Naive thymus-derived CD4-positive, alpha-beta T cell (primary cell): ENCODE measurements at regions of chr3 and their contacts with region 1.

Region 1: DNA sequence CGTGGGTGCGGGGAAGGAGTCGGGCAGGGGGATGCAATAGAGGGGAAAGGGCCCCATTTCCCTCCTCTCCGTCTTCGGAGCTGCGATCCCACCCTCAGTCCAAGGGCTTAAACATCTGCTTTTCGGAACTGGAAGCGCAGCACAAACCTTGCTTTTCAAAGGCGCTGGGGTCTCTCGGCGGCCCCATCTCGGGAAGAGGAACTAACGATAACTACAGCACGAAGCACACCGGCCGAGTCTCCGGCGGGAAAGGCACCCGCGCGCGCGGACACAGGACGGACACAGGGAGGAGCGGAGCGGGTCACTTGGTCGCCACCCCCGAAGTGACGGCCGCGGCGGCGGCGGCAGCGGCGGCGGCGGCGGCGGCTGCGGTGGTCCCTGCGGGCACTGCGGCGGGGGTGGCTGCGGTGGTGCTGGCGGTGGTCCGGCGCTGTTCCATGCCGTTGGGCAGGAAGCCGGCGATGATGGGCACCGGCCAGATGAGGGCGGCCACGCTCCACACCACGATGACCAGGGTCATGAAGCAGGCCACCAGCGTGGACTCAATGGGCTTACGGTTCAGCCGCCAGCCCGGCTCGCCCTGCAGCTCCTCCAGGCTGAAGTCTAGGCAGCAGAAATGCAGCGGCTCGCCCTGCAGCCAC is 1.1 kb downstream of the TMEM158 start:
- DNase-seq: peak in 4 of 9 donors; percentile 8 to 50 (median 20)
- ATAC-seq: peak; percentile 52
- H3K4me3 ChIP-seq: no peak overlapping the region
- H3K4me3 Mint-ChIP-seq: peak overlapping the region; percentile 84 to 89 (median 87)
- H3K27ac ChIP-seq: no peak overlapping the region
- H3K27ac Mint-ChIP-seq: peak overlapping the region in 3 of 9 donors; percentile 38 to 84 (median 66)
- H3K4me1 ChIP-seq: peaks cover 4 to 7% of the 10 kb centered on the region in 2 donors
- H3K4me1 Mint-ChIP-seq: peaks cover 10 to 16% (median 13%) of the 10 kb centered on the region in 7 donors
- H3K27me3 ChIP-seq: peaks cover 8 to 14% of the 10 kb centered on the region in 2 donors
- H3K27me3 Mint-ChIP-seq: peaks cover 71 to 82% (median 81%) of the 10 kb centered on the region in 5 donors

Region 2: GRCh38 chr3:45269952-45270351 is 45.0 kb after region 1 on chr3:
- CTCF ChIA-PET with region 1: no interaction called
- POLR2A ChIA-PET with region 1: no interaction called
- intact Hi-C with region 1: no loop called
- DNase-seq: no peak
- ATAC-seq: no peak
- H3K4me3 ChIP-seq: no peak overlapping the region
- H3K4me3 Mint-ChIP-seq: no peak overlapping the region
- H3K27ac ChIP-seq: no peak overlapping the region
- H3K27ac Mint-ChIP-seq: no peak overlapping the region
- H3K4me1 ChIP-seq: no peaks in the 10 kb centered on the region
- H3K4me1 Mint-ChIP-seq: peaks cover 0 to 2% (median 0%) of the 10 kb centered on the region in 7 donors
- H3K27me3 ChIP-seq: no peaks in the 10 kb centered on the region
- H3K27me3 Mint-ChIP-seq: peaks cover 5 to 28% (median 11%) of the 10 kb centered on the region in 5 donors

Region 3: DNA sequence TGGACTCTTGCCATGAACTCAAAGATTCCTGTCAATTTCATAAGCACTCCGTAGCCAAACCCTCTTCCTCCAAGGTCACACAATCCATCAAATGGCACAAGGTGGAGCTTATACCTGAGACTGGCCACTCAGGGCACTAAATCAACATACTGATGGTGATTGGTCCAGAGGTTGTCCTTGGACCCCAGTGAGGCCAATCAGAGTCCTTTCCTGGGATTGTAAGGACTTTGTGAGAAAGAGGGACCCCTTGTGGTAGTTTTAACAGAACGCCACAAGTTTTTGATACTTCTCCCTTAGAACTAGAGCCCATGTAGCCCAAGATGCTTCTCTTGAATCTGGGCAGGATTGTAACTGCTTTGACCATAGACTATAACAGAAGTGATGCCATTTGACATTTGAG is 119.0 kb after region 1 on chr3:
- CTCF ChIA-PET with region 1: no interaction called
- POLR2A ChIA-PET with region 1: no interaction called
- intact Hi-C with region 1: no loop called
- DNase-seq: no peak
- ATAC-seq: no peak
- H3K4me3 ChIP-seq: no peak overlapping the region
- H3K4me3 Mint-ChIP-seq: no peak overlapping the region
- H3K27ac ChIP-seq: no peak overlapping the region
- H3K27ac Mint-ChIP-seq: no peak overlapping the region
- H3K4me1 ChIP-seq: no peaks in the 10 kb centered on the region
- H3K4me1 Mint-ChIP-seq: no peaks in the 10 kb centered on the region
- H3K27me3 ChIP-seq: no peaks in the 10 kb centered on the region
- H3K27me3 Mint-ChIP-seq: peaks cover 0 to 13% (median 0%) of the 10 kb centered on the region in 5 donors

Region 4: DNA sequence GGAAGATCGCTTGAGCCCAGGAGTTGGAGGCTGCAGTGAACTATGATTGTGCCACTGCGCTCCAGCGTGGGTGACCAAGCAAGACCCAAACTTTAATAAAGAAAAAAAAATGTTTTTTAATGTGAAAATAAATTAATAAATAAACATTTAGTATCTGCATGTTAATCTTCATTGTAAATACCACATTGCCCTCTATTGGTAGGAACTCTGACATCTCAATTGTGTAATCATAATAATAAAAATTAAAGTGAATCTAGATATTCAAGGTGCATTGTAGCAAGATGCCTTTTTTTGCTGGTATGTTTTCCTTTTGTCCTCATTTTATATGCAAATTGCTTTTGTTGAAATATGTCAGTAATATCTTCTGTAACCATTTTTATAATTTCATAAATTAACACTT is 274.6 kb after region 1 on chr3:
- CTCF ChIA-PET with region 1: no interaction called
- POLR2A ChIA-PET with region 1: no interaction called
- intact Hi-C with region 1: loop called in 1 of 2 experiments (anchors 10 kb)
- DNase-seq: peak in 3 of 9 donors; percentile 19 to 33 (median 23)
- ATAC-seq: no peak
- H3K4me3 ChIP-seq: no peak overlapping the region
- H3K4me3 Mint-ChIP-seq: no peak overlapping the region
- H3K27ac ChIP-seq: no peak overlapping the region
- H3K27ac Mint-ChIP-seq: peak overlapping the region in 2 of 9 donors; percentile 47 to 76
- H3K4me1 ChIP-seq: peaks cover 0 to 26% of the 10 kb centered on the region in 2 donors
- H3K4me1 Mint-ChIP-seq: peaks cover 5 to 32% (median 25%) of the 10 kb centered on the region in 7 donors
- H3K27me3 ChIP-seq: no peaks in the 10 kb centered on the region
- H3K27me3 Mint-ChIP-seq: no peaks in the 10 kb centered on the region